Adrenal gland (tissue), 19 donors: ENCODE measurements at regions of chr20 and their contacts with region 1.

Region 1: GRCh38 chr20:13458860-13459451 is 179.8 kb downstream of the TASP1 start:
- DNase-seq: peak in 5 of 7 donors; percentile 15 to 55 (median 26)
- H3K4me3 ChIP-seq: no peak overlapping the region
- H3K27ac ChIP-seq: no peak overlapping the region
- H3K4me1 ChIP-seq: peaks cover 0 to 2% of the 10 kb centered on the region in 2 donors
- H3K27me3 ChIP-seq: no peaks in the 10 kb centered on the region
- CTCF ChIP-seq: peak; percentile 55 to 74 (median 59)
- POLR2A ChIP-seq: no peak

Region 2: DNA sequence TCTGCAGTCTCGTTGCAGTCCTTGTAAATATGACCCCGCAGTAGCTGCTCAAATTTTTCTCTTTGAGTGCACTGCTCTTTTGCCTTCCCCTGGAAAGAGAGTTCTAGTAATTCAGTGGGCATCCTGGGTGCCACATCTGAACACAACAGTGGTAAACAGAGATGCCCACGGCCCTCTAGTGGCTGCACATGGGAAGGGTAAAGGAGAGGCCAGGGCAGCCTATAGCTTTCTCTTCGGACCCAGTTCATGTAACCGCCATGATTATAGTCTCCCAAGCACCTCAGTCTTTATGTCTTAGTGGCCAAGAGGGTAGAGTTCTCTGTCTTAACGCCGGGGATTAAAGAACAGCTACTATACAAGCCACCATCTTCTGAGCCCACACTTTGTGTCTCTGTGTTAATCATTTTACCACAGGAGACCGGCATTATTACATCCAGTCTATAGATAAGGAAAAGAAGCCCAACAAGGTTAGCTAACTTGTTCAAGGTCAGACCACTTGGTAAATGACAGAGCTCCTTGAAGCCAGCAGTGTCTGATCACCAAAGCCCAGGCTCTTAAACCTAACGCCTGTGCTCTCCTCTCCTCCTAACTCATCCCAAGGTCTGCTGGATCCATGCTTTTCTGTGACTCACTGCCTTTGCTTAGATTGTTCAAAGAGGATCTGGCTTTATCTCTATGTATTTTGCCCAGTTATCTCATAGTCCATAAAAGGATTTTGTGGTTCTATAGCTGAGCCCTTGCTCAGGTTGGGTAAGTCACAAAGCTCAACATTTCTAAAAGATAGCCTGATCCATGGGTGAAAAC is 156.1 kb before region 1 on chr20:
- intact Hi-C with region 1: no loop called
- DNase-seq: peak in 6 of 7 donors; percentile 24 to 44 (median 37)
- H3K4me3 ChIP-seq: no peak overlapping the region
- H3K27ac ChIP-seq: no peak overlapping the region
- H3K4me1 ChIP-seq: no peaks in the 10 kb centered on the region
- H3K27me3 ChIP-seq: no peaks in the 10 kb centered on the region
- CTCF ChIP-seq: peak; percentile 33 to 58 (median 48)
- POLR2A ChIP-seq: no peak

Region 3: GRCh38 chr20:13546497-13547131 is 87.7 kb after region 1 on chr20:
- intact Hi-C with region 1: loop called in 1 of 2 experiments (anchors 10 kb)
- DNase-seq: peak; percentile 64 to 90 (median 78)
- H3K4me3 ChIP-seq: no peak overlapping the region
- H3K27ac ChIP-seq: no peak overlapping the region
- H3K4me1 ChIP-seq: no peaks in the 10 kb centered on the region
- H3K27me3 ChIP-seq: no peaks in the 10 kb centered on the region
- CTCF ChIP-seq: peak; percentile 61 to 78 (median 72)
- POLR2A ChIP-seq: no peak